Activated CD4-positive, alpha-beta T cell treated with anti-CD3 and anti-CD28 coated beads, Interleukin-2, amount 10 ng/mL, durations not matched to agents 7 days and 5 days (primary cell): ENCODE measurements at regions of chr19 and their contacts with region 1.

Region 1: DNA sequence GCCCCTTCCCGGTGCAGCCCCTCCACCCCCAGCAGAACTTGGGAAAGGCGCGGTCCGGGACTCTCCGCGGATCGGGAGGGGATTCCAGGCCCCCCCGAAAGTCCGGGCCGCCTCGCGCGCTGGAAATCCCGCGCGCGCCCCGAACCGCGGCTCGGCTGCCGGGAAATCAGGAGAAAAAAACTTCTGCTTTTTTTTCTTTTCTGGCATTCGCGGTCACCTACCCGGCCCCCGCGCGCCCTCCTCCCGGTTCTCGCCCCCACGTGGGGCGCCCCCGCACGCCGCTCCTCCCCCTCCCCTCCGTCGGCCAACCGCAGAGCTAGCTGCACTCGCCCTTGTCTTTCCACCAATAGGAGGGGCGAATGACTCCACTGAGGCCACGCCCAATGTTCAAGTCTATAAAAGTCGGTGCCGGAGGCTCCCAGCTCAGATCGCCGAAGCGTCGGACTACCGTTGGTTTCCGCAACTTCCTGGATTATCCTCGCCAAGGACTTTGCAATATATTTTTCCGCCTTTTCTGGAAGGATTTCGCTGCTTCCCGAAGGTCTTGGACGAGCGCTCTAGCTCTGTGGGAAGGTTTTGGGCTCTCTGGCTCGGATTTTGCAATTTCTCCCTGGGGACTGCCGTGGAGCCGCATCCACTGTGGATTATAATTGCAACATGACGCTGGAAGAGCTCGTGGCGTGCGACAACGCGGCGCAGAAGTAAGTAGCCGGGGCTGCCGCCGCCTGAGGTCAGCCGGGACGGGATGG is at the start of gene GADD45B:
- DNase-seq: peak; percentile 97
- H3K4me3 Mint-ChIP-seq: peak within 1 kb of the TSS; percentile 99
- H3K27ac Mint-ChIP-seq: peak within 1 kb of the TSS; percentile 88
- H3K4me1 Mint-ChIP-seq: peaks cover 19% of the 10 kb centered on the region
- H3K27me3 Mint-ChIP-seq: no peaks in the 10 kb centered on the region
- total RNA-seq, gene GADD45B: 31.2 to 39.2 TPM

Region 2: GRCh38 chr19:2455851-2456570 is 19.9 kb before region 1 on chr19:
- CTCF ChIA-PET with region 1: interaction called, 3 read pairs
- POLR2A ChIA-PET with region 1: interaction called, 12 read pairs
- DNase-seq: peak; percentile 48
- H3K4me3 Mint-ChIP-seq: peak overlapping the region; percentile 82
- H3K27ac Mint-ChIP-seq: peak overlapping the region; percentile 92
- H3K4me1 Mint-ChIP-seq: peaks cover 28% of the 10 kb centered on the region
- H3K27me3 Mint-ChIP-seq: no peaks in the 10 kb centered on the region

Region 3: DNA sequence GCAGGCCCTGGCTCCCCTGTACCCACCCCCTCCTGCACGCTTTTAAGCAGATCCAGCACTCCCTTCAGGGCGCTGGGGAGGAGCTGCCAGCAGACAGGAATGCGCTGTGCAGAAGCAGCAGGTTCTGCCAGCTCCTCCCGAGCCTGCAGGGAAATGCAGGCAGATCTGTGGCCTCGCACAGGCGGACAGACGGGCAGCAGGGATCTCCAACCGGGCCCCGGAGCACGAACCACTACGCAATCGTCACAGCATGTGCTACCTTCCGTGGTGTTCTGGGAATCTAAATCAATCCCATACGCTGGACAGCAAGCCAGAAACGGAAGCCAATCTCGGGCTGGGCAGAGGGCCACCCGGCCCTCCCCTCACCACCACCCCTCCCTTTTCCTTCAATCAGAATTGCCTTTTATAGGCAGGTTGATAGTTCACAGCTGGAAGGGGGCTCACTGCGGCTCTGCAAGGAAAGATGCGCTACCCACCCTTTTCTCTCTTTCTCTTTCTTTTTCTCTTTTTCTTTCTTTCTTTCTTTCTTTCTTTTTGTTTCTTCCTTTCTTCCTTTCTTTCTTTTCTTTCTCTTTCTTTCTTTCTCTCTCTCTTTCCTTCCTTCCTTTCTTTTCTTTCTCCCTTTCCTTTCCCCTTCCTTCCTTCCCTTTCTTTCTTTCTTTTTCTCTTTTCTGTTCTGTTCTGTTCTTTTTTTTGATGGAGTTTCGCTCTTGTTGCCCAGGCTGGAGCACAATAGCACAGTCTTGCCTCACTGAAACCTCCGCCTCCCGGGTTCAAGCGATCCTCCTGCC is 126.7 kb after region 1 on chr19:
- CTCF ChIA-PET with region 1: interaction called, 7 read pairs
- POLR2A ChIA-PET with region 1: interaction called, 10 read pairs
- DNase-seq: no peak
- H3K4me3 Mint-ChIP-seq: no peak overlapping the region
- H3K27ac Mint-ChIP-seq: no peak overlapping the region
- H3K4me1 Mint-ChIP-seq: peaks cover 25% of the 10 kb centered on the region
- H3K27me3 Mint-ChIP-seq: peaks cover 2% of the 10 kb centered on the region

Region 4: DNA sequence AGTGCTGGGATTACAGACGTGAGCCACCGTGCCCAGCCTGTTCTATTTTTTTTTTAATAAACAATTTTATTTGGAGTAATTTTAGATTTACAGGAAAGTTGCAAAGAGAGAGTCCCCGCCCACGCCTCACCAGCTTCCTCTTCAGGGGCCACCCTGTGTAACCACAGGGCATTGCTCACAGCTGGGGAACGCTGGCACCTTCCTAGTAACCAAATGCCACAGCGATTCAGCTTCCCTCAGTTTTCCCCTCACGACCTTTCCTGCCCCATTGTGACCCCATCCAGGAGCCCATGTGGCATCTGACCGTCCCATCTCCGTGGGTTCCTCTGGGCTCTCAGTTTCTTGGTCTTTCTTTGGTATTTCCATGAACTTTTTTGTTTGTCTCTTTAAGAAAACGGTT is 142.7 kb after region 1 on chr19:
- CTCF ChIA-PET with region 1: interaction called, 22 read pairs
- POLR2A ChIA-PET with region 1: interaction called, 27 read pairs
- DNase-seq: peak; percentile 63
- H3K4me3 Mint-ChIP-seq: peak overlapping the region; percentile 23
- H3K27ac Mint-ChIP-seq: peak overlapping the region; percentile 97
- H3K4me1 Mint-ChIP-seq: peaks cover 68% of the 10 kb centered on the region
- H3K27me3 Mint-ChIP-seq: no peaks in the 10 kb centered on the region

Region 5: DNA sequence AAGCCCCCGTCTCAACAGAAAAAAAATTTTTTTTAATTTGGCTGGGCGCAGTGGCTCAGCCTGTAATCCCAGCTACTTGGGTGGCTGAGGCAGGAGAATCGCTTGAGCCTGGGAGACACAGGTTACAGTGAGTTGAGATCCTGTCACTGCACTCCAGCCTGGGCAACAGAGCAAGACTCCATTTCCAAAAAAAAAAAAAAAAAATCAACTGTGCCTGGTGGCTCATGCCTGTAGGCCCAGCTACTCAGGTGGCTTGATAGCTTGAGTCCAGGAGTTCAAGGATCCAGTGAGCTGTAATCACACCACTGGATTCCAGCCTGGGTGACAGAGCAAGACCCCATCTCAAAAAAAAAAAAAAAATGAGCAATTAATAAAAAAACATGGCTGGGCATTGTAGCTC is 1025.9 kb after region 1 on chr19:
- CTCF ChIA-PET with region 1: no interaction called
- POLR2A ChIA-PET with region 1: interaction called, 10 read pairs
- DNase-seq: no peak
- H3K4me3 Mint-ChIP-seq: no peak overlapping the region
- H3K27ac Mint-ChIP-seq: no peak overlapping the region
- H3K4me1 Mint-ChIP-seq: peaks cover 36% of the 10 kb centered on the region
- H3K27me3 Mint-ChIP-seq: no peaks in the 10 kb centered on the region